Activated CD4-positive, alpha-beta T cell treated with anti-CD3 and anti-CD28 coated beads, Interleukin-2, amount 10 ng/mL, durations not matched to agents 24 days and 14 days (primary cell): ENCODE measurements at regions of chr10 and their contacts with region 1.

Region 1: GRCh38 chr10:95246579-95247051 is 44.2 kb downstream of the PDLIM1 start:
- DNase-seq: peak; percentile 90
- H3K4me3 Mint-ChIP-seq: no peak overlapping the region
- H3K27ac Mint-ChIP-seq: peak overlapping the region; percentile 52
- H3K4me1 Mint-ChIP-seq: peaks cover 29% of the 10 kb centered on the region
- H3K27me3 Mint-ChIP-seq: no peaks in the 10 kb centered on the region

Region 2: DNA sequence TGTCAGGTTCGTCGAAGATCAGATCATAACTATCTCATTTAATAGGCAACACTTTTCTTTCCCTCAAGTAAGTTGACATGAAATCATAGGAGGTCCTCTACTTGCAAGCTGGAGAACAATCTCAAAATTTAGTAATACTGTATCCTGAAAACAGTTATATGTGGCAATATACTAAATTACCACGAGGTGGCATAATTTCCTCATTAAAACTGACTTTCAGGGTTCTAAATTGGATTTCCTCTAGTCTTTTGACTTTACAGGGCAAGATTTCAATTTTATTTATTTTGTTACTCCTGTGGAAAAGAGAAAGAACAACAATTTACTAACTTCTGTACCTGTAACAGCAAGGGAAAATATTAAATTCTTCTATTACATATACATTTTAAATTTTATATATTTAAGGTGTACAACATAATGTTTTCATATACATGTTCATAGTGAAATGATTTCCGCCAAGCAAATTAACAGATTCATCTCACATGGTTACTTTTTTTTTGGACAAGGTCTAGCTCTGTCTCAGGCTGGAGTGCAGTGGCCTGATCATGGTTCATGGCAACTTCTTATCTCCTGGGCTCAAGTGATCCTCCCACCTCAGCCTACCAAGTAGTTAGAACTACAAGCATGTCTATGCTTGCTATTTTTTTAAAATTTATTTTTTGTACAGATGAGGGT is 616.5 kb before region 1 on chr10:
- intact Hi-C with region 1: loop called (anchors 5 kb)
- DNase-seq: peak; percentile 37
- H3K4me3 Mint-ChIP-seq: no peak overlapping the region
- H3K27ac Mint-ChIP-seq: no peak overlapping the region
- H3K4me1 Mint-ChIP-seq: peaks cover 2% of the 10 kb centered on the region
- H3K27me3 Mint-ChIP-seq: peaks cover 3% of the 10 kb centered on the region

Region 3: GRCh38 chr10:94902570-94902969 is 344.0 kb before region 1 on chr10:
- intact Hi-C with region 1: no loop called
- DNase-seq: no peak
- H3K4me3 Mint-ChIP-seq: no peak overlapping the region
- H3K27ac Mint-ChIP-seq: no peak overlapping the region
- H3K4me1 Mint-ChIP-seq: no peaks in the 10 kb centered on the region
- H3K27me3 Mint-ChIP-seq: no peaks in the 10 kb centered on the region

Region 4: DNA sequence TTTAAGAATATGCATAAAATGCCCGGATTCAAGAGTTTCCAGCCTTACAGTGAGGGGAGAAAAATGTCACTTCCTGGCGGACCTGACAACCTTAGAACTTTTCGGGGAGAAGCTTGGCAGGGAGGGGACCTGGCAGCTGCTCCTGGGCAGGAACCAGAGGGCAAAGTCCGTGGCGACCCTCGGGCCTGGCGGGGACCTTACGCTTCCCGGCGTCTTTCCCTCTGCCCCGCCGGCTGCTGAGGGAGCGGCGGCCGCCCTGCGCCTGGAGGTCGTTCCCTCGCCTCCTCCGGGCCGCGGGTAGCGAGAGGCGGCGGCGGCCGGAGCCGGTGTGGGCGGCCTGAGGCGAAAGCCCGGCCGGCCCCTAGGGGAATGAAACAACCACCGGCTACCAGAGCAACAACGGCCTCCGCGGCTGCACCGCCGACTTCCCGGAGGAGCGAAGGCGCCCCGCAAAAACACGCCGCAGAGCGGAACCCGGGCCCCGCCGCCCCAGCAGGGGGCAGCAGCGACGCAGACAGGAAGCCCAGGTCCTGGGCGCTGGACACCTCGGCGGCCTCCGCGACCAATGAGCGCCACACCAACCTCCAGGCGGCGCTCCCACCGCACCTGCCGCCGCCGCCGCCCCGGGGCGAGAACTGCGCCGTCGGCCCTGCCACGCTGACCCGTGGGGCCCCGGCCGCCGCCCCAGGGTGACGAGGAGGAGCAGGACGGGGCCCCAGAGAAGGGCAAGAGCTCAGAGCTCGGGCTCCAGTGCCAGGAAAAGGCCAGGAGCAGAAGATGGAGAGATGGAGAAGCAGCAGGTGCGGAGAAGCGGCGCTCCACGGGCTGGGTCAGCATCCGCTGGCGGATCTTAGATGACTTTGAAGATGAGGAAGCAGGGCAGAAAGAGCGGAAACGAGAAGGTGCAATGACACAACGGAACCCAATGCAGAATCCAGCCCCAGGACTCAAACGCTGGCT is 63.1 kb before region 1 on chr10:
- intact Hi-C with region 1: loop called (anchors 1 kb)
- DNase-seq: peak; percentile 95
- H3K4me3 Mint-ChIP-seq: peak overlapping the region; percentile 85
- H3K27ac Mint-ChIP-seq: peak overlapping the region; percentile 34
- H3K4me1 Mint-ChIP-seq: peaks cover 9% of the 10 kb centered on the region
- H3K27me3 Mint-ChIP-seq: peaks cover 50% of the 10 kb centered on the region

Region 5: DNA sequence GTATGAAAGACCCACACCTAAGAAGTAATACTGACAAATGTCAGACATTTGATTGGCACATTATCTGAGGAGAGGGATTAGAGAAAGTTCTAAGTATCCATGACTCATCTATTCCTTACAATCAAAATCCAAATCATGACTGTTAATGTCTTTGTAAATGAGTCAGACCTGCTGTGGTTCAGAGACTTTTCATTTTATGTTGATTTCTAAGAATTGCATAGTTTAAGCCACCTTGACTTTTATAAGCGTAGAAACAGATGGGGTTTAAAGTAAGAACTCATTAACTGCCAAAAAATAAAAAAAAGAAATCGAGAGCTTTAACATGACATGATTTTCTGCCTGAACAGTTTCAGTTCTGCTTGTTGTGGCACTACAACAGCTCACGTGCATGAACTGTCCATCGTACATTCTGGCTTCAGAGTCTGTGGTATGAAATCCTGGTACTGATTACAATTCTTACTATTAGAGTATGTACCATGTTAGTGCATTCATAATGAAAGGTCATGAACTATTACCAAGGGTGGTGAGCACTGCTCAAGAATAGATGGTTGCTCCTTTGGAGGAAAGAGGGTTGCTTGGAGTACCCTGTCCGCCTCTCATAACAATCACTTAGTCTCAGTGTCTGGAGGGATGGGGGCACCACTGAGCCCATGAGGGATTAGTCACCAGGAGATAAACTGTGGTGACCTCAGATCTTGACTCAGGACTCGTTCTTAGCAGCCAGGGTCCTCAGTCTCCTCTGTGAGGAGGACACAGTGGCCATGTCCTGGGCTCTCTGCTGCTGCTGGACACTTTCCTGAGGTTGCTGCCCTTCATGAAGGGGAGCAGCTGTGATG is 10.3 kb before region 1 on chr10:
- intact Hi-C with region 1: loop called (anchors 1 kb)
- DNase-seq: no peak
- H3K4me3 Mint-ChIP-seq: peak overlapping the region; percentile 50
- H3K27ac Mint-ChIP-seq: peak overlapping the region; percentile 83
- H3K4me1 Mint-ChIP-seq: peaks cover 25% of the 10 kb centered on the region
- H3K27me3 Mint-ChIP-seq: peaks cover 3% of the 10 kb centered on the region

Region 6: GRCh38 chr10:95308389-95309302 is 62.0 kb after region 1 on chr10:
- intact Hi-C with region 1: loop called (anchors 5 kb)
- DNase-seq: no peak
- H3K4me3 Mint-ChIP-seq: no peak overlapping the region
- H3K27ac Mint-ChIP-seq: no peak overlapping the region
- H3K4me1 Mint-ChIP-seq: peaks cover 15% of the 10 kb centered on the region
- H3K27me3 Mint-ChIP-seq: peaks cover 15% of the 10 kb centered on the region

Region 7: DNA sequence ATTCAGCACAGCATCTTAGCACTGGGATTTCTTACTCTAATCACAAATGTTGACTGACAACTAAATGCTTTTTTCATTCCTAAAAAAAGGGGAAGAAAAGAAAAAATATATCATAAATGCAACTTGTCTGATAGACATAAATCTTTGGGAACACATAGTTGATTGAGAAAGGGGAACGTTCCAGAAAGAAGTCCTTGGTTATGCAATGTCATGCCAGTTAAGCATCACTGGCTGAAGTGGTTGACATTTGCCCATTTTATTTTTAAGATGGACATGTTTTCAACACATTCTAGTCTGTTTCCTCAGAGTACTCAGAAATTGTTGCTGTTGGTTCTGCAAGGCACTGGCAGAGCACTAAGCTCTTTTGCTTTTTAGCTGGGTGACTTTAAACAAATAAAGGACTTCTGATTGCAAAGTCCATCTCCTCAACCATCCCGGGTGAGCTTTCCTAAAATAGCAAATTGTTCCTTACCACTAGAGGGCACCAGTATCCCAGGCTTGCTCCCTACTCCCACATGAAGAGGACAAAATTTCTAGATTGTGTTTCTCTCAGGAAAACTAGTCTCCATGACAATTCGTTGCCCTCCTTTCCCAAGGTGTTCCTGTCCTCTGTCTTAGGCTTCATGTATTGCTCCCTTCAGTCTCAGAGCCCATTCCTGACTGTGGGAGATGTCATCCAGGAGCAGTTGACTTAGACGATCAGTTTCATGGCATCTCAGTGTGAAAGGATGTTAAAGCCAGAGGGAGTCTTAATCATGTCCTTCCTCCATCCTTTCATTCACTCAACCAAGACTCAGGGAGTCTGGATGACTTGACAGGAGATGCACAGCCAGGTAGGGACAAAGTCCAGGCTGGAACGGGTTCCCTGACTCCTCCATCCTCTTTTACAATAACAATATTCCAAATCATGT is 1088.3 kb after region 1 on chr10:
- intact Hi-C with region 1: no loop called
- DNase-seq: peak; percentile 62
- H3K4me3 Mint-ChIP-seq: no peak overlapping the region
- H3K27ac Mint-ChIP-seq: no peak overlapping the region
- H3K4me1 Mint-ChIP-seq: no peaks in the 10 kb centered on the region
- H3K27me3 Mint-ChIP-seq: peaks cover 25% of the 10 kb centered on the region